CD4-positive, alpha-beta memory T cell (primary cell): ENCODE measurements at regions of chr19 and their contacts with region 1.

Region 1: DNA sequence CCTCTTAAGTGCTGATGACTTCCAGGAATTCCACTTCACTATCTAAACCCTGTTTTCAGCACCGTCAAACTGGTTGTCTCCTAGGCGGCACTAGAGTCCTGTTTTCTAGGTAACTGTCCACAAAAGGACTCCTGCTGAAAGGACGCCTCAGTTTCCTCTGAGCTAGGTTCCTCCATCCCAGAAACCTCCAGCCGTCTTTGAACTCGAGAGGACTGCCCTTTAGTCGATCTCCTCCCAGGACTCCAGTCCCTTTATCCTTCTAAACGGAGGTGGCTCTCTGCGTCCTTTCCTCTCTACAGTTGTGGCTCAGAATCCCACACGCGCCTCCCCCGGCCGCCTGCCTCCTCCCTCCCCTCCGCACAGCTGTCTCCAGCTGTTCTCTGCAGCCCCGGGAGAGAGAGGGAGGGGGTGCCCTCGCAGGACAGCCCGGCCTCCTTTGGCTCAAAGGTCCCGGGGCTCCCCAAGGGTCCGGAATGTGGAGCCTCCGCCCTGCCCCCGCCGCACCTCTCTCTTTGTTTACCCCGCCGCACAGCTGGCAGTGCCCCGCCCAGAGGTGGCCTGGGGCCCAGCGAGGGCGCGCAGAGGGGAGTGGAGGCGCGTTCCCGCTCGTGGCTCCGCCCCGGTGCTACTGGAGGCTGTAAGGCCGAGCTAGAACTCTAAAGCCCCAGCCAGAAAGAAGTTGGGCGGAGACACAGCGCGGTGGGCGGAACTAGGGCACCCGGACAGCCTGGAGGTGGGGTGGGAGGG is 2.4 kb downstream of the LTBP4 start:
- DNase-seq: peak; percentile 94 to 99 (median 98)
- H3K4me3 ChIP-seq: peak overlapping the region in 1 of 2 donors; percentile 59
- H3K4me3 Mint-ChIP-seq: peak overlapping the region; percentile 80 to 97 (median 90)
- H3K27ac ChIP-seq: peak overlapping the region; percentile 61
- H3K27ac Mint-ChIP-seq: peak overlapping the region; percentile 96 to 99 (median 97)
- H3K4me1 ChIP-seq: peaks cover 84% of the 10 kb centered on the region
- H3K4me1 Mint-ChIP-seq: peaks cover 39 to 91% (median 64%) of the 10 kb centered on the region in 4 donors
- H3K27me3 ChIP-seq: peaks cover 14% of the 10 kb centered on the region
- H3K27me3 Mint-ChIP-seq: peaks cover 9 to 20% of the 10 kb centered on the region in 2 donors

Region 2: DNA sequence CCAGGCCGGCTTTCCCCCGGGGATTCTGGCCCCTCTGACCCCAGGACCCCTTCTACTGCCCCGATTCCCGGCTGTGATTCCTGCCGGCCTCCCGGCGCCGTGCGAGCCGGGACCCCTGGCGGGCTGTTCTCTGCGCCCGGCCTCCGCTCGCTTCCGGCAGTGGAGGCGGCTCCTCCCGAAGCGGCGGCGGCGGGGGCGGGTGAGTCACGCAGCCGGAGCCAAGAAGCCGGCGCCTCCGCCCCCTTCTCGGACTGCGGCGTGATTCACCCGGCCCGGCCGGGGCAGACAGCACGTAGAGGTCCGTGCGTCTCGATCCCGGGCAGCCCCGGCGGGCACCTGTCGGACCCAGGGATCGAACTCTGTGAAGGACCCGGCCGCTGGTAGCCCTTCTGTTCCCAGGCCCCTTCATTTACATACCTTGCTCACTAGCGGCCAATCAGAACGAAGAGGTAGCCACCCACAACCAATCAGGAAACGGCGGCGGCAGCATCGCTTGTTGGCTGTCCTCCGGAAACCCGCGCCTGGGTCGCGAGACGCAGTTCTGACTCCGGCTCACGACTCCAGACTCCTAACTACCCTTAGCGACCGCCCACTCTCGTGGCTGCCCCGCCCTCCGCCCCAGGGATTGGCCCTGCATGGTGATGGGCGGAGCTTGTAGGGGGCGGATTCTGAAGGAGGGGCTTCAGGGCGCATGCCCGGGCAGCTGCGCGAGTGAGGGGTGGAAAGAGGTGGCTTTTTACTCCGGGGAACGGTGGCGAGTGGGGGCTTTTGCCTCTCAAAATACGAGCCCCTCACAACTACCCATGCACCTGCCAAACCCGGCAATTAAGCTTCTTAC is 177.9 kb before region 1 on chr19 and contains the start of gene SERTAD1:
- CTCF ChIA-PET with region 1: interaction called, 4 read pairs
- POLR2A ChIA-PET with region 1: interaction called, 10 read pairs
- intact Hi-C with region 1: loop called (anchors 5 kb)
- DNase-seq: peak; percentile 100
- H3K4me3 ChIP-seq: peak within 1 kb of the TSS; percentile 79 to 85
- H3K4me3 Mint-ChIP-seq: peak within 1 kb of the TSS; percentile 92 to 99 (median 95)
- H3K27ac ChIP-seq: peak within 1 kb of the TSS; percentile 92
- H3K27ac Mint-ChIP-seq: peak within 1 kb of the TSS; percentile 97 to 99 (median 98)
- H3K4me1 ChIP-seq: peaks cover 28% of the 10 kb centered on the region
- H3K4me1 Mint-ChIP-seq: peaks cover 11 to 34% (median 22%) of the 10 kb centered on the region in 4 donors
- H3K27me3 ChIP-seq: no peaks in the 10 kb centered on the region
- H3K27me3 Mint-ChIP-seq: peaks cover 0 to 2% of the 10 kb centered on the region in 2 donors
- total RNA-seq, gene SERTAD1: 10.6 to 11.3 TPM

Region 3: DNA sequence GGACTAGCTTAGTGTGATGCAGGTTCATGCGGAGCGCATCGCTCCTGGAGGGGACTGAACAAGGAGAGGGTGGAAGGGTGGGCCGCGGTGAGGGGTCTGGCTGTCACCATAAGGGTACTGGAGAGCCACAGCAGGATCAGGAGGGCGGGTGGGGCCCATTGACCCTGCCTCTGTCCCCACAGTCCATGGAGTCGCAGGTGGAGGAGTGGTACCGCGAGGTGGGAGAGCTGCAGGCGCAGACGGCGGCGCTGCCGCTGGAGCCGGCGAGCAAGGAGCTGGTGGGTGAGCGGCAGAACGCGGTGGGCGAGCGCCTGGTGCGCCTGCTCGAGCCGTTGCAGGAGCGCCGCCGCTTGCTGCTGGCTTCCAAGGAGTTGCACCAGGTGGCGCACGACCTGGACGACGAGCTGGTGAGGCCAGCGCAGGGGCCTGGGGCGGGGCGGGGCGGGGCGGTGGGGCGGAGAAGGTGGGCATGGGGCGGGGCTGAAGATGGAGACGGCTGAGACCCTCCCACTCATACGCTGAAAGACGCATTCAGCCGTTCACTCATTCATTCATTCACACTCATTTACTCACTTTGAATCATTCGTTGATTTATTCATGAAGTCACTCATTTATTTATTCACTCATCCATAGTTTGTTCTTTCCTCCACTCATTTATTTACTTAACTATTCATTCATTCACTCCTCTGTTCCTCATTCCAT is 54.4 kb before region 1 on chr19:
- CTCF ChIA-PET with region 1: interaction called, 57 read pairs
- POLR2A ChIA-PET with region 1: interaction called, 8 read pairs
- intact Hi-C with region 1: loop called (anchors 1 kb)
- DNase-seq: peak; percentile 57 to 66 (median 61)
- H3K4me3 ChIP-seq: no peak overlapping the region
- H3K4me3 Mint-ChIP-seq: peak overlapping the region; percentile 5 to 55 (median 38)
- H3K27ac ChIP-seq: no peak overlapping the region
- H3K27ac Mint-ChIP-seq: no peak overlapping the region
- H3K4me1 ChIP-seq: peaks cover 5% of the 10 kb centered on the region
- H3K4me1 Mint-ChIP-seq: peaks cover 5 to 11% (median 8%) of the 10 kb centered on the region in 4 donors
- H3K27me3 ChIP-seq: peaks cover 5% of the 10 kb centered on the region
- H3K27me3 Mint-ChIP-seq: peaks cover 36 to 49% of the 10 kb centered on the region in 2 donors

Region 4: DNA sequence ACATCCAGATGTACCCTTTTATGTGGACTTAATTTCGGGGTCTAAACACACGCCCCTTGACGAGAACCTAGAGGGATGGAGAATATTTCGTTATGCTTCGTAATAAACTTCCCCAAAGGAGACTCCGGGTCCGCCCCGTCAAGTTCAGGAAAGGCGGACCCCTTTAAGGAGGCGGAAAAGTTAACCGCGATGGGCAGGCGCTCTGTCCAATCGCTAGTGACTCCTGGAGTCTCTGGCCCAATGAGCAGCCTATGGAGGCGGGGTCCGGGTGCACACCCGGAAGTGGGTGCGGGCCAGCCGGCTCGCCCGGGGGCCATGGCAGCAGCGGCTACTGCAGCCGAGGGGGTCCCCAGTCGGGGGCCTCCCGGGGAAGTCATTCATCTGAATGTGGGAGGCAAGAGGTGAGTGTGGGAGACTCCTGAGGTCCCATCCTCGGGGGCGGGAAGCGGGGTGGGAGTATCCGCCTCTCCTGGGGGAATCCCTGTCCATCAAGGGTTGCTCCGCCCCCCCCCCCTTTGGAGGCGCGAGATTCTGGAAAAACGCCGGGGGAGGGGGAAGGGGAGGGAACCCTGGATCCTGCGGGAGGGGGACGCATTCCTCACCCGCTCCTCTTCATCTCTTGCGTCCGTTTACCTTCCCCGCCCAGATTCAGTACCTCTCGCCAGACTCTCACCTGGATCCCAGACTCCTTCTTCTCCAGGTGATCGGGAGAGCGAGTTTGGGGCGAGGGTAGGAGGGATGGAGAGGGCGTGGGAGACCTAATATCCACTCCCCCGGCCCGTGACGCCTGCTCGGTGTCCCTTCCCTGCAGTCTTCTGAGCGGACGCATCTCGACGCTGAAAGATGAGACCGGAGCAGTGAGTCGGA is 26.7 kb before region 1 on chr19 and contains the start of gene SHKBP1:
- CTCF ChIA-PET with region 1: interaction called, 17 read pairs
- POLR2A ChIA-PET with region 1: interaction called, 71 read pairs
- intact Hi-C with region 1: loop called (anchors 1 kb)
- DNase-seq: peak; percentile 91 to 94 (median 92)
- H3K4me3 ChIP-seq: peak within 1 kb of the TSS; percentile 73 to 74
- H3K4me3 Mint-ChIP-seq: peak within 1 kb of the TSS; percentile 83 to 94 (median 91)
- H3K27ac ChIP-seq: peak within 1 kb of the TSS; percentile 72
- H3K27ac Mint-ChIP-seq: peak within 1 kb of the TSS; percentile 87 to 96 (median 91)
- H3K4me1 ChIP-seq: peaks cover 23% of the 10 kb centered on the region
- H3K4me1 Mint-ChIP-seq: peaks cover 14 to 31% (median 23%) of the 10 kb centered on the region in 4 donors
- H3K27me3 ChIP-seq: no peaks in the 10 kb centered on the region
- H3K27me3 Mint-ChIP-seq: no peaks in the 10 kb centered on the region
- total RNA-seq, gene SHKBP1: 167 to 170 TPM

Region 5: GRCh38 chr19:40640744-40641143 is 37.2 kb after region 1 on chr19:
- CTCF ChIA-PET with region 1: interaction called, 106 read pairs
- POLR2A ChIA-PET with region 1: interaction called, 13 read pairs
- intact Hi-C with region 1: no loop called
- DNase-seq: no peak
- H3K4me3 ChIP-seq: no peak overlapping the region
- H3K4me3 Mint-ChIP-seq: no peak overlapping the region
- H3K27ac ChIP-seq: no peak overlapping the region
- H3K27ac Mint-ChIP-seq: peak overlapping the region in 1 of 7 donors; percentile 61
- H3K4me1 ChIP-seq: no peaks in the 10 kb centered on the region
- H3K4me1 Mint-ChIP-seq: peaks cover 0 to 3% (median 2%) of the 10 kb centered on the region in 4 donors
- H3K27me3 ChIP-seq: no peaks in the 10 kb centered on the region
- H3K27me3 Mint-ChIP-seq: peaks cover 2 to 4% of the 10 kb centered on the region in 2 donors

Region 6: DNA sequence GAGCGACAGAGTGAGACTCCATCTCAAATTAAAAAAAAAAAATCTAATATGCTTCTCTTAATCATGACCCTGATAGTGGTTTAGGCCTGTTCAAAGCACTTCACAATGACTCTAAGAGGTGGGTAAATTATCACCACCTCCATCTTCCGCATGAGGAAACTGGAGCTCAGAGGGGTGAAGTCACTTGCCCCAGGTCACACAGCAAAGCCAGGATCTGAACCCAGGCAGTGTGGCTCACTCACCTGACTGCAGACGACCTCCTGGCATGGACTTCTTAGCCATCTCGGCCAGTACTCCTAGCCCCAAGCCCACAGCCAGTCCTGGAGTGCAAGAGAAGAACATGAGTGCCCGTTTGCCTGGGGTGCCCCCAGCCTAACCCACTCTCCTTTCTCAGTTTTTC is 106.3 kb after region 1 on chr19:
- CTCF ChIA-PET with region 1: no interaction called
- POLR2A ChIA-PET with region 1: no interaction called
- intact Hi-C with region 1: no loop called
- DNase-seq: no peak
- H3K4me3 ChIP-seq: no peak overlapping the region
- H3K4me3 Mint-ChIP-seq: no peak overlapping the region
- H3K27ac ChIP-seq: no peak overlapping the region
- H3K27ac Mint-ChIP-seq: no peak overlapping the region
- H3K4me1 ChIP-seq: peaks cover 10% of the 10 kb centered on the region
- H3K4me1 Mint-ChIP-seq: peaks cover 16 to 32% (median 19%) of the 10 kb centered on the region in 4 donors
- H3K27me3 ChIP-seq: no peaks in the 10 kb centered on the region
- H3K27me3 Mint-ChIP-seq: no peaks in the 10 kb centered on the region

Region 7: DNA sequence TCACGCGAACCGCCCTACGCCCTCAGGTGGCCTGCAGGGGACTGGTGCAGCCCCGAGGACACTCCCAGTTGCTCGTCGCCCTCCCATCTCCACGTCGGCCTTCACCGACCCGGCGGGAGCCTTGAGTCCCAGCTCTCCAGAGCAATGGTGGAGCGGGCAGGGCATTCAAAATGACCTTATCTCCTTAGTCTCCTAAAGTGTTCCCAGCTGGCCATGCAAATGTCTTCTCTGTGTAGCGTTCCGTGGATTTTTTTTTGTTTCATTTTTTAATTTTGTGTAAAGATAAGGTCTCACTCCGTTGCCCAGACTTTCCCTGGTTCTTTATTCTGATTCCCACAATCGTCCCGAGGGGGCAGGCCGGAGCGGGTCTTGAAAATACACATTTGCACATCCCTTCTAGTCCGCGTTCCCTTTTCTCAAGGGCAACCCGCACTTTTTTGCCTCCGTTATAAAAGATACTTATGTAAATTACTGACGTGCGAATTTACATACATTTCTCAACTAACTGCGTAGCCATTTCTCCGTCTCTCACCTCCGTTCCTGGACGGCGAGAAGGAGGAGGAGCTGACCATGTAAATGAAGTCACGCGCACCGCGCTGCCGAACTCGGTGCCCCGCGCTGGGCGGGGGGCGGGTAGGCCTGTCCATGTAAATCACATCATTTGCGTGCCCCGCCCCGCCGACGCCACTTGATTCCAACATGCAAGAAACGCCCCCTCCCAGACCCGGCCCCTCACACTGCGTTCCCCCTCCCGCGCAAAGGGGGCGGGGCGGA is 194.8 kb after region 1 on chr19:
- CTCF ChIA-PET with region 1: no interaction called
- POLR2A ChIA-PET with region 1: interaction called, 5 read pairs
- intact Hi-C with region 1: loop called (anchors 1 kb)
- DNase-seq: peak; percentile 100
- H3K4me3 ChIP-seq: peak overlapping the region; percentile 55 to 86
- H3K4me3 Mint-ChIP-seq: peak overlapping the region; percentile 92 to 99 (median 96)
- H3K27ac ChIP-seq: peak overlapping the region; percentile 82
- H3K27ac Mint-ChIP-seq: peak overlapping the region; percentile 98 to 100 (median 99)
- H3K4me1 ChIP-seq: peaks cover 47% of the 10 kb centered on the region
- H3K4me1 Mint-ChIP-seq: peaks cover 30 to 55% (median 41%) of the 10 kb centered on the region in 4 donors
- H3K27me3 ChIP-seq: no peaks in the 10 kb centered on the region
- H3K27me3 Mint-ChIP-seq: no peaks in the 10 kb centered on the region